CD4-positive, alpha-beta T cell (primary cell): ENCODE measurements at regions of chr5 and their contacts with region 1.

Region 1: GRCh38 chr5:132490486-132491367 is at the start of gene IRF1:
- DNase-seq: peak; percentile 94 to 99 (median 98)
- ATAC-seq: peak; percentile 71
- H3K4me3 ChIP-seq: peak within 1 kb of the TSS; percentile 98
- H3K4me3 Mint-ChIP-seq: peak within 1 kb of the TSS; percentile 98
- H3K27ac ChIP-seq: peak within 1 kb of the TSS; percentile 98 to 99
- H3K27ac Mint-ChIP-seq: peak within 1 kb of the TSS; percentile 97
- H3K4me1 ChIP-seq: peaks cover 75% of the 10 kb centered on the region
- H3K4me1 Mint-ChIP-seq: peaks cover 83% of the 10 kb centered on the region
- H3K27me3 ChIP-seq: no peaks in the 10 kb centered on the region
- H3K27me3 Mint-ChIP-seq: peaks cover 7% of the 10 kb centered on the region
- CTCF ChIP-seq: no peak
- total RNA-seq, gene IRF1: 1,212 to 1,234 TPM

Region 2: GRCh38 chr5:131084436-131084835 is 1406.3 kb before region 1 on chr5:
- CTCF ChIA-PET with region 1: no interaction called
- POLR2A ChIA-PET with region 1: no interaction called
- intact Hi-C with region 1: no loop called
- DNase-seq: no peak
- ATAC-seq: no peak
- H3K4me3 ChIP-seq: no peak overlapping the region
- H3K4me3 Mint-ChIP-seq: no peak overlapping the region
- H3K27ac ChIP-seq: no peak overlapping the region
- H3K27ac Mint-ChIP-seq: no peak overlapping the region
- H3K4me1 ChIP-seq: no peaks in the 10 kb centered on the region
- H3K4me1 Mint-ChIP-seq: no peaks in the 10 kb centered on the region
- H3K27me3 ChIP-seq: no peaks in the 10 kb centered on the region
- H3K27me3 Mint-ChIP-seq: no peaks in the 10 kb centered on the region
- CTCF ChIP-seq: no peak

Region 3: GRCh38 chr5:132003170-132003744 is 487.5 kb before region 1 on chr5:
- CTCF ChIA-PET with region 1: no interaction called
- POLR2A ChIA-PET with region 1: no interaction called
- intact Hi-C with region 1: no loop called
- DNase-seq: no peak
- ATAC-seq: no peak
- H3K4me3 ChIP-seq: no peak overlapping the region
- H3K4me3 Mint-ChIP-seq: no peak overlapping the region
- H3K27ac ChIP-seq: no peak overlapping the region
- H3K27ac Mint-ChIP-seq: no peak overlapping the region
- H3K4me1 ChIP-seq: peaks cover 72% of the 10 kb centered on the region
- H3K4me1 Mint-ChIP-seq: peaks cover 60% of the 10 kb centered on the region
- H3K27me3 ChIP-seq: no peaks in the 10 kb centered on the region
- H3K27me3 Mint-ChIP-seq: no peaks in the 10 kb centered on the region
- CTCF ChIP-seq: no peak

Region 4: GRCh38 chr5:132369474-132370180 is 121.1 kb before region 1 on chr5 and contains the start of gene SLC22A5:
- CTCF ChIA-PET with region 1: interaction called, 4 read pairs
- POLR2A ChIA-PET with region 1: interaction called, 22 read pairs
- intact Hi-C with region 1: no loop called
- DNase-seq: peak; percentile 40 to 88 (median 70)
- ATAC-seq: peak; percentile 94
- H3K4me3 ChIP-seq: peak within 1 kb of the TSS; percentile 68
- H3K4me3 Mint-ChIP-seq: peak within 1 kb of the TSS; percentile 91
- H3K27ac ChIP-seq: peak within 1 kb of the TSS; percentile 24 to 41
- H3K27ac Mint-ChIP-seq: peak within 1 kb of the TSS; percentile 60
- H3K4me1 ChIP-seq: peaks cover 35% of the 10 kb centered on the region
- H3K4me1 Mint-ChIP-seq: peaks cover 26% of the 10 kb centered on the region
- H3K27me3 ChIP-seq: no peaks in the 10 kb centered on the region
- H3K27me3 Mint-ChIP-seq: no peaks in the 10 kb centered on the region
- CTCF ChIP-seq: no peak
- total RNA-seq, gene SLC22A5: 4.3 to 4.5 TPM

Region 5: DNA sequence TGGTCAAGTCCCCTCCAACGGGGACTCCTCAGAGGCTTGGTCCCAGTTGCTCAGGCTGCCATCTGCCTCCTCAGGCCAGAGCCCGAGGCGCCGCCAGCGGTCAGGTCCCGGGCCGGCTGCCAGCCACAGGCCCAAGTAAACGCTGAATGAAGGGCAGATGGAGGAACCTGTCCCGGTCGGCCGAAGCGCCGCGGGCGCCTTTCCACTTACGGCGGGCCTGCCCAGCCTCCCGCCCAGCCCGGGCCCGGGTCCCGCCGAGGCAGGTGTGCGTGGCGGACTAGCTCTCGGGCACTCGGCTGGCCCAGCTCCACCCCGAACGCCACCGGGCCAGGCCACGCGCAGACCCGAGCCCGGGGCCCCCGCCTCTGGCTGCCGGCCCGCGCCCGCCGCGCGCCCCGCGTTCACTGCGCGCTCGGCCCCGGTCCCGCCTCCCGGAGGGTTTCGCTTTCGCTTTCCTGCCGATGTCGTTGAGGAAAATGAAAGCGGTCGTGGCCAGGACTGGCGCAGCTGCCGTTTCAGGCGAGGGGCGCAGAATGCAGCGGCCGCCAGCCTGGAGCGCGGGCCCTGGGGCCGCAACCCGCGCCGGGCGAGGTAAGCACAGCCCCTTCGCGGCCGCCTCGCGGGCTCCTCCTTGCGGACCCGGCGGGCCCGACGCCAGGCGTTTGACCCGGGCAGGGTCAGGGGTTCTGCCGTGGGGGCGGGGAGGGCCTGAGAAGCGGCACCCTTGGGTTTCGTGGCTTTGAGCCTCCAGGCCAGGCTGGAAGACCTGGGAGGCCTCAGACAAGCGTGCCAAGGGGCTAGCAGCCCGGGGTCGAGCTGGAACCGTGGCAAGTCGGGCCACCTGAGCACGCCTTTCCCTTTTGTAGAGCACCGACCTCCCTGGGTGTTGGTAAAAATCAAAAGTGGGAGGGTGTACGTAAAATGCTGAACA is 80.0 kb before region 1 on chr5:
- CTCF ChIA-PET with region 1: interaction called, 11 read pairs
- POLR2A ChIA-PET with region 1: interaction called, 446 read pairs
- intact Hi-C with region 1: loop called in 1 of 2 experiments (anchors 1 kb)
- DNase-seq: peak; percentile 69 to 93 (median 76)
- ATAC-seq: peak; percentile 69
- H3K4me3 ChIP-seq: peak overlapping the region; percentile 91
- H3K4me3 Mint-ChIP-seq: peak overlapping the region; percentile 96
- H3K27ac ChIP-seq: peak overlapping the region; percentile 98
- H3K27ac Mint-ChIP-seq: peak overlapping the region; percentile 98
- H3K4me1 ChIP-seq: peaks cover 64% of the 10 kb centered on the region
- H3K4me1 Mint-ChIP-seq: peaks cover 92% of the 10 kb centered on the region
- H3K27me3 ChIP-seq: no peaks in the 10 kb centered on the region
- H3K27me3 Mint-ChIP-seq: no peaks in the 10 kb centered on the region
- CTCF ChIP-seq: peak; percentile 74

Region 6: DNA sequence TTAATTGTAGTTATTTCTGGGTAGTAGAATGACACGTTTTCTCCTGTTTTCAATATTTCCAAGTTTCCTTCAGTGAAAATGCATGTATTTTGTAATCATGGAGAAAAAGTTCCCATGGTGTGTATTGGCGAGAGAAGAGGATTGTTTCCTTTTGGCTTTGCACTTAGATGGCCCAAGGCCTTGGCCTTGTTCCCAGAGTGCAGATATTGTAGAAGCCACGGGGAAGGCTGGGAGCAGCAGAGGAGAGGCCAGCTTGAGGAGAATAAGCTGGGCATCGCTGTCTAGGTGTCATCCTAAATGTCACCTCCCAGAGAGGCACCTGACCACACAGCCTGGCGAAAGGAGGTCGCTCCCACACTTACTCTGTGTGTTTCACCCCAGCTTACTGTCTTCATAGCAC is 44.1 kb before region 1 on chr5:
- CTCF ChIA-PET with region 1: interaction called, 5 read pairs
- POLR2A ChIA-PET with region 1: interaction called, 12 read pairs
- intact Hi-C with region 1: no loop called
- DNase-seq: no peak
- ATAC-seq: no peak
- H3K4me3 ChIP-seq: peak overlapping the region; percentile 19
- H3K4me3 Mint-ChIP-seq: peak overlapping the region; percentile 39
- H3K27ac ChIP-seq: peak overlapping the region in 1 of 2 donors; percentile 23
- H3K27ac Mint-ChIP-seq: peak overlapping the region; percentile 82
- H3K4me1 ChIP-seq: peaks cover 74% of the 10 kb centered on the region
- H3K4me1 Mint-ChIP-seq: peaks cover 67% of the 10 kb centered on the region
- H3K27me3 ChIP-seq: no peaks in the 10 kb centered on the region
- H3K27me3 Mint-ChIP-seq: no peaks in the 10 kb centered on the region
- CTCF ChIP-seq: no peak

Region 7: GRCh38 chr5:132473019-132473531 is 17.7 kb before region 1 on chr5:
- CTCF ChIA-PET with region 1: interaction called, 9 read pairs
- POLR2A ChIA-PET with region 1: interaction called, 1,045 read pairs
- intact Hi-C with region 1: loop called in 1 of 2 experiments (anchors 2 kb)
- DNase-seq: peak; percentile 73 to 96 (median 81)
- ATAC-seq: peak; percentile 68
- H3K4me3 ChIP-seq: no peak overlapping the region
- H3K4me3 Mint-ChIP-seq: peak overlapping the region; percentile 74
- H3K27ac ChIP-seq: peak overlapping the region; percentile 70 to 77
- H3K27ac Mint-ChIP-seq: peak overlapping the region; percentile 97
- H3K4me1 ChIP-seq: peaks cover 92% of the 10 kb centered on the region
- H3K4me1 Mint-ChIP-seq: peaks cover 96% of the 10 kb centered on the region
- H3K27me3 ChIP-seq: no peaks in the 10 kb centered on the region
- H3K27me3 Mint-ChIP-seq: peaks cover 10% of the 10 kb centered on the region
- CTCF ChIP-seq: no peak

Region 8: DNA sequence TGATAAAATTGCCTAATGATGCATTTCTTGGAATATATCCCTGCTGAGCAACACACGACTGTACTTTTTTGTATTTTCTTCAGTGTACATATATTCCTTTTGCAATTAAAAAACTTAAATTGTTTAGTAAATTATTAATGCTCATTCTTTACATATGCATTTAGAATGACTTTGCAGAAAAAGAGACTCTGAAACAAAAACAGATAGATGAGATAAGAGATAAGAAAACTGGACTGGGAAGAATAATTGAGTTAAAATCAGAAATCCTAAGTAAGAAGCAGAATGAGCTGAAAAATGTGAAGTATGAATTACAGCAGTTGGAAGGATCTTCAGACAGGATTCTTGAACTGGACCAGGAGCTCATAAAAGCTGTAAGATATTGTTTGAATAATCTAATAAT is 98.7 kb after region 1 on chr5:
- CTCF ChIA-PET with region 1: no interaction called
- POLR2A ChIA-PET with region 1: no interaction called
- intact Hi-C with region 1: no loop called
- DNase-seq: no peak
- ATAC-seq: no peak
- H3K4me3 ChIP-seq: no peak overlapping the region
- H3K4me3 Mint-ChIP-seq: no peak overlapping the region
- H3K27ac ChIP-seq: no peak overlapping the region
- H3K27ac Mint-ChIP-seq: no peak overlapping the region
- H3K4me1 ChIP-seq: no peaks in the 10 kb centered on the region
- H3K4me1 Mint-ChIP-seq: no peaks in the 10 kb centered on the region
- H3K27me3 ChIP-seq: no peaks in the 10 kb centered on the region
- H3K27me3 Mint-ChIP-seq: no peaks in the 10 kb centered on the region
- CTCF ChIP-seq: no peak

Region 9: DNA sequence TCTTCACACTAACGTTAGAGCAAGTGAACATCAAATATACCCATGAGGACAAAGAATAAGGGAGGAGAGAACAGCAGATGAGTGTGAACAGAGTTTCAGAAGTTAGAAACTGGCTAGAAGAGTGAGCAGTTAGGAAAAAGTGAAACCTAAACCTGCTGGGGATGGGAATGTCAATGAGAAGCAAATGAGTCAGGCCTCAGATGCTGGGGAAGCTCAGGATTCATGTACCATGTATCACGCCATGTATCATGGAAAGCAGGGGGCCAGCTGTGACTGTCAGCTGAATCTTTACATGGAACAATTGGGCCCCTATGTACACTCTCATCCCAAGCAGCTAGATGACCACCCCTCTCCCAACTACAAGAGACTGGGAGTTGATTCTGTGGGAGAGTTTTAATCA is 359.3 kb after region 1 on chr5:
- CTCF ChIA-PET with region 1: no interaction called
- POLR2A ChIA-PET with region 1: no interaction called
- intact Hi-C with region 1: no loop called
- DNase-seq: no peak
- ATAC-seq: no peak
- H3K4me3 ChIP-seq: no peak overlapping the region
- H3K4me3 Mint-ChIP-seq: no peak overlapping the region
- H3K27ac ChIP-seq: no peak overlapping the region
- H3K27ac Mint-ChIP-seq: no peak overlapping the region
- H3K4me1 ChIP-seq: no peaks in the 10 kb centered on the region
- H3K4me1 Mint-ChIP-seq: no peaks in the 10 kb centered on the region
- H3K27me3 ChIP-seq: no peaks in the 10 kb centered on the region
- H3K27me3 Mint-ChIP-seq: peaks cover 4% of the 10 kb centered on the region
- CTCF ChIP-seq: no peak

Region 10: DNA sequence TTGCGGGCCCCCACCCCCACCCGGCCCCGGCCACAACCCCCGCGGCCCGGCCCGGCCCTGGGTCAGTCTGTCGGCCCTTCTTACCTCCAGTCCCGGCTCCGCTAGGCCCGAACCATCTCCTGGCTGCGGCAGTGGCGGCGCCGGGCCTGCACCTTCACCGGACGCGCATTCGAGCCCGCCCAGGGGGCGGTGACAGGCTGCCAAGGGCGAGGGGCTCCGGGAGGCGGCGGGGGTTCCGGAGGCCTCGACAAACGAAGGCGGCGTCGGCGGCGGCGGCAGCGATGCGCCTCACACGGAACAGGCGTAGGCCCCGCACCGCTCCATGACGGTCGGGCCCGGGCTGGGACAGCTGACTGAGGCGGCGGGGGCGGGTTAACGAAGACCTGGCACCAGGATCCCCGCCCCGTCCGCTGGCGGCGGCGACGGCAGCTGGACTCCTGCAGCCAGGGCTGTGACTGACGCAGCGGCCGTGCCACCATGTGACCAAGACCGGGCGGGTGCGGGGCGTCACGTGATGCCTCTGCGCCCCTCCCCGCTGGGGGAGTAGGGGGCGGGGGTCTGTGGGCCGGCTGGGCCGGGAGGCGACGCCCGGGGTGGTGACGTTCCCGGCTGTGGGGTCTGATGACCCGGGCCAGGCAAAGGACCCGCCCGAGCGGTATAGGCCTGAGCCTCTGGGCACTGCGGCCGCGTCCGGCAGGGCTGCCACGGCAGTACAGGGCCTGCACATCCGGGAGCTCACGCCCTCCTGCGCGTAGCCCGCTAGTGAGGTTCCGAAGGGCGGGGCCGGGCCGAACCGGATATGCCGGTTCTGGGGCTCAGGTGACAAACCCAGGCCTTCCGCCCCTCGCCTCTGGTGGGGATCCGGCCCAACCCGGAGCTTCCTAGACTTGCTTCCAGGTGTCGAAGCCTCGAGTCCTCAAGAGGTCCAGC is 472.7 kb after region 1 on chr5 and contains the start of gene AFF4:
- CTCF ChIA-PET with region 1: no interaction called
- POLR2A ChIA-PET with region 1: interaction called, 11 read pairs
- intact Hi-C with region 1: no loop called
- DNase-seq: peak; percentile 67 to 95 (median 80)
- ATAC-seq: peak; percentile 74
- H3K4me3 ChIP-seq: peak within 1 kb of the TSS; percentile 65
- H3K4me3 Mint-ChIP-seq: peak within 1 kb of the TSS; percentile 99
- H3K27ac ChIP-seq: peak within 1 kb of the TSS; percentile 92 to 96
- H3K27ac Mint-ChIP-seq: peak within 1 kb of the TSS; percentile 97
- H3K4me1 ChIP-seq: peaks cover 26% of the 10 kb centered on the region
- H3K4me1 Mint-ChIP-seq: peaks cover 39% of the 10 kb centered on the region
- H3K27me3 ChIP-seq: no peaks in the 10 kb centered on the region
- H3K27me3 Mint-ChIP-seq: no peaks in the 10 kb centered on the region
- CTCF ChIP-seq: no peak
- total RNA-seq, gene AFF4: 97.9 to 103 TPM